ENCODE measurements at regions of chr7 and their contacts with region 1.

Region 1: GRCh38 chr7:27095897-27096767 is at the start of gene HOXA1:
- DNase-seq: peak; percentile 92 to 95
- ATAC-seq: peak; percentile 86
- H3K4me3 ChIP-seq: peak within 1 kb of the TSS; percentile 80 to 91
- H3K27ac ChIP-seq: peak within 1 kb of the TSS; percentile 18 to 90
- H3K4me1 ChIP-seq: no peaks in the 10 kb centered on the region
- H3K27me3 ChIP-seq: no peaks in the 10 kb centered on the region
- total RNA-seq, gene HOXA1: 1.3 to 1.6 TPM

Region 2: DNA sequence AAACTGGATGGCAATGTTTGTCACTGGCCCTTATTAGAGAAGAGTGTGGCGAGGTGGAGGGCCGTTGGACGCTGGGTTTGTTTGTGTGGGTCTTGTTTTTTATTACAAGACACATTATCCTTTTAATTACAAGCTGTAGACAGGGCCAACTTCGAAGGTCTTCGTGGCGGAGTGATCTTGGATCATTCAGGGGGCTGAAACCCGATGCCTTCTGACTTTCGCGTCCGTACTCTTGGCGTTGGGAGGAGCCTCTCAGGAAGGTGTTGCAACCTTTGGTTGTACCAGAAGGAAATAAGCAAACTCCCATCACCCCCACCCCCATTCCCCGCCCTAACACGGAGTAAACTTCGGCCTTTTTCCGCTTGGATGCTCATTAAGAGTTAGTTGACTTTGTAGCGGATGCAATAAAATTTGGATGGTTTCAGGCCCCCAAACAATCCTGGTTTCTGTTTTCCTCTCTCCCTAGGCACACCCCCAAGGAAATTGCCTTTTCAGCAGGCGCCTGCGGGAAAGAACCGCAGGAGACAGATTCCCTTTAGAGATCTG is 1238.7 kb before region 1 on chr7:
- intact Hi-C with region 1: loop called in 1 of 2 experiments (anchors 2 kb)
- DNase-seq: no peak
- ATAC-seq: no peak
- H3K4me3 ChIP-seq: peak overlapping the region in 1 of 2 donors; percentile 28
- H3K27ac ChIP-seq: no peak overlapping the region
- H3K4me1 ChIP-seq: no peaks in the 10 kb centered on the region
- H3K27me3 ChIP-seq: peaks cover 0 to 4% of the 10 kb centered on the region in 2 donors

Region 3: DNA sequence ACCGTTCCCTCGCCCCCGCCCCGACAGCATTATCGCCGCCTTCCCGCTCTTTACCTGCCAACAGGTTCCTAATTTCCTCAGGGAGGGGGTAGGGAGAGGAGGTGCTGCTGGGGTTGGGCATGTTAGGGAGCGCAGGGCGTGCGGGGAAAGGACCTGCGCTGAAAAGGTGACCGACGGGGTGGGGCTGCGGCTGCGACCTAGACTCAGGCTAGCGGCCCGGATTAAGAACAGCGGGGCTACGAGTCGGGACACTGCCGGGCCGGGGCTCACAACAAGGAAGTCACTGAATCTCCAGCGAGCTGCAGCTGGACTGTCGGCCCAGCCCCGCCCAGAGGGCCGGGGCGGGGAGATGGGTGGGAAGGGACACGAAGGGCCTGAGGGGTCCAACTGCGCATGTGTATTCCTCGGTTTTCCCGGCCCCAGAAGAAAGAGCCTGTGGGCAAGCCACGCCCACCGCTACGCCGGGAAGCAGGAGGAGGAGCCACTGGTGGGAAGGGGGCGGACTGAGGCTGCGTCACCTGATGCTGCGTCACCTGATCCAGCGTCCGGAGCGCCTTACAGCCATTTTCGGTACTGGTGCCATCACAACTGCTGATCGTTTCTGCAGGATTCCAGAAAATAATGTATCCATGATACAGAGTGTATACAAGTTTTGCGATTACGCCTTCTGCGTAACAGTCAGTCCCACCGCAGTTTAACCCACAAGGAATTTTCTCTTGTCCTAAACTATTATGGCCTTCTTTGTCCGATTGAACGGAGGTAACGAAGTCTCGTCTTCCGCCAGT is 231.6 kb before region 1 on chr7 and contains the start of gene SKAP2:
- intact Hi-C with region 1: loop called (anchors 1 to 5 kb)
- DNase-seq: peak; percentile 99
- ATAC-seq: peak; percentile 99
- H3K4me3 ChIP-seq: peak within 1 kb of the TSS; percentile 45 to 66
- H3K27ac ChIP-seq: peak within 1 kb of the TSS in 1 of 2 donors; percentile 19
- H3K4me1 ChIP-seq: no peaks in the 10 kb centered on the region
- H3K27me3 ChIP-seq: no peaks in the 10 kb centered on the region
- total RNA-seq, gene SKAP2: 43.4 to 48.5 TPM

Region 4: DNA sequence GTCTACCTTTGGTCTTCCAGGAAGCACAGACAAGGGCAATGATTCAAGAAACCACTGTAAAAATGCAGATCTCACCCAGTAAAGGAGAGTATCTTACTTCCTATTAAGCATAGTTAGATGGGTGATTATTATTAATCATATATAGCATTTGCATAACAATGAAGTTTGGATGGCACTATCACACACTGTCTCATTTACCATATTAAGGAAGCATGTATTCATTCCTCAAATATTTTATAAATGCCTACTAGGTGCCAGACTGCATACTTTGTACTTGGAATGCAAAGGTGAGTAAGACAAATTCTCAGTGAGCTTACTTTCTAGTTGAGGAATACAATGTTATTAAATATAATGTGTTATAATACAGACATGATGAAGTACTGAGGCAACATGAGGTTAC is 177.9 kb before region 1 on chr7:
- intact Hi-C with region 1: no loop called
- DNase-seq: no peak
- ATAC-seq: no peak
- H3K4me3 ChIP-seq: no peak overlapping the region
- H3K27ac ChIP-seq: no peak overlapping the region
- H3K4me1 ChIP-seq: no peaks in the 10 kb centered on the region
- H3K27me3 ChIP-seq: no peaks in the 10 kb centered on the region

Region 5: DNA sequence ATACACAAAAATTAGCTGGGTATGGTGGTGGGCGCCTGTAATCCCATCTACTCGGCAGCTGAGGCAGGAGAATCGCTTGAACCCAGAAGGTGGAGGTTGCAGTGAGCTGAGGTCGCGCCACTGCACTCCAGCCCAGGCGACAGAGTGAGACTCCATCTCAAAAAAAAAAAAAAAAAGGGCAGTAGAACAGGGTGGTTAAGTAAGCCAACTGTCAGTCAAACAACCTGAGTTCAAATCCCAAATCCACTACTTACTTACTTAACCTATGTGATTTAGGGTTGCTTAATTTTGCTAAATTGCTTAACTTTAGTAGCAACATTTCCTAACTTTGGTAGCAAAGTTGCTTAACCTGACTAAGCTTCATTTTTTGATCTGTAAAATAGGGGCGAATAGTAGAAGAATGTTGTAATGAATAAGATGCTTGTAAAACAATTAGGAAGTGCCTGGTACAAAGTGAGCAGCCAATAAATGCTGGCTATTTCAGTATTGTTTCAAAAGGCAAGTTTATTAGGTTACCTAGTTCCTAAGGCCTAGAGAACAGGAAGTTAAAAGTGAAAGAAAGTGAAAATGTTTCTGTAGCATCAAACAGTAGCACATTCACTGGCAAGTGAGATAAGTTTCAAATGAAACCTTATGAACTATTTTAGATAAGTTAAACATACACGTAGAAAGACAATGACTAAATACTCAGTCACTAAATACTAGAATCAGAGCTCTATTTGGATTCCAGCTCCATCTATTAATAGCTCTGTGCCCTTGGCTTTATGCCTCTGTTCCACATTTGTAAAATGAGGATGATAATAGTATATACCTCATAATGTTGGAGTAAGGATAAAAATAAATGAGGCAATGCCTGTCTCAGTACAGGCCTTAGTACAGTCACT is 64.6 kb before region 1 on chr7:
- intact Hi-C with region 1: loop called (anchors 5 kb)
- DNase-seq: no peak
- ATAC-seq: peak; percentile 26
- H3K4me3 ChIP-seq: no peak overlapping the region
- H3K27ac ChIP-seq: peak overlapping the region in 1 of 2 donors; percentile 92
- H3K4me1 ChIP-seq: no peaks in the 10 kb centered on the region
- H3K27me3 ChIP-seq: no peaks in the 10 kb centered on the region

Region 6: DNA sequence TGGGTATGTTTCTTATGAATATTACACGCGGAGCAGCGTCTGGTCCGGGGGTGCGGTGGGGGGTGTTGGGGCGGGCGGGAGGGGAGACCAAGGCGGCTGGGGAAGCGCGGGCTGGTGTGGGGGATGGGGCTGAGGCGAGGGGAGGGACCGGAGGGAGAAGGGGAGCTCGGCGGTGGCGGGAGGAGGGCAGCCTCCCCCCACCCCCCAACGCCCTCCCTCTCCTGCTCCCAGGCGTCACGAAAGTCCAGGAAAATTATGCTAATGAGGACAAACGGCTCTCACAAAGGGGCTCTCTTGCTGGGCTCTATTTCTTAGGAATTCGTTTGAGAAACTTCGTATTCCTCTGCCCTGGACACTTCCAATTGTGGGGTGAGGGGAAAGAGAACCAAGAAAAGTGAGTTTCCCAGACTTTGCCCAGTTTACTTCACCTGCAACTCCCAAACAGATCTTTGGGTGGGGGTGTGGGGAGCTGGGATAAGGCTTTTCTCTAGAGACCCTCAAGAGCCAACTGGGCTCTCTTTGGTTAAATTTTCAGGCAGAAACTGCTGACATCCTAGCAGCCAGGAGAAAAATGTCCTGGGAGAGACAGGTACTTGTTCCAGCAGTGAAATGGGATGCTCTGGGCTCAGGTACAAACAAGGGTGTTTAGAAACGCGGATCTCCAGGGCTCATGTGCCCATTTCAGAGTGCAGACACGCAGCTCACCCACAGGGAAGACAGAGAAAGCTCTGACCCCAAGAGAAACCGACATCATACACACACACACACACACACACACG is 18.0 kb after region 1 on chr7:
- intact Hi-C with region 1: loop called in 1 of 2 experiments (anchors 2 kb)
- DNase-seq: peak; percentile 81 to 88
- ATAC-seq: peak; percentile 12
- H3K4me3 ChIP-seq: peak overlapping the region; percentile 84 to 94
- H3K27ac ChIP-seq: peak overlapping the region; percentile 92 to 95
- H3K4me1 ChIP-seq: peaks cover 0 to 6% of the 10 kb centered on the region in 2 donors
- H3K27me3 ChIP-seq: no peaks in the 10 kb centered on the region

Region 7: GRCh38 chr7:27130540-27131389 is 34.6 kb after region 1 on chr7 and contains the start of gene HOXA4:
- intact Hi-C with region 1: loop called in 1 of 2 experiments (anchors 5 kb)
- DNase-seq: peak; percentile 96 to 98
- ATAC-seq: peak; percentile 97
- H3K4me3 ChIP-seq: peak within 1 kb of the TSS; percentile 89 to 90
- H3K27ac ChIP-seq: peak within 1 kb of the TSS; percentile 31 to 68
- H3K4me1 ChIP-seq: no peaks in the 10 kb centered on the region
- H3K27me3 ChIP-seq: no peaks in the 10 kb centered on the region
- total RNA-seq, gene HOXA4: 5.6 to 11.6 TPM

Region 8: DNA sequence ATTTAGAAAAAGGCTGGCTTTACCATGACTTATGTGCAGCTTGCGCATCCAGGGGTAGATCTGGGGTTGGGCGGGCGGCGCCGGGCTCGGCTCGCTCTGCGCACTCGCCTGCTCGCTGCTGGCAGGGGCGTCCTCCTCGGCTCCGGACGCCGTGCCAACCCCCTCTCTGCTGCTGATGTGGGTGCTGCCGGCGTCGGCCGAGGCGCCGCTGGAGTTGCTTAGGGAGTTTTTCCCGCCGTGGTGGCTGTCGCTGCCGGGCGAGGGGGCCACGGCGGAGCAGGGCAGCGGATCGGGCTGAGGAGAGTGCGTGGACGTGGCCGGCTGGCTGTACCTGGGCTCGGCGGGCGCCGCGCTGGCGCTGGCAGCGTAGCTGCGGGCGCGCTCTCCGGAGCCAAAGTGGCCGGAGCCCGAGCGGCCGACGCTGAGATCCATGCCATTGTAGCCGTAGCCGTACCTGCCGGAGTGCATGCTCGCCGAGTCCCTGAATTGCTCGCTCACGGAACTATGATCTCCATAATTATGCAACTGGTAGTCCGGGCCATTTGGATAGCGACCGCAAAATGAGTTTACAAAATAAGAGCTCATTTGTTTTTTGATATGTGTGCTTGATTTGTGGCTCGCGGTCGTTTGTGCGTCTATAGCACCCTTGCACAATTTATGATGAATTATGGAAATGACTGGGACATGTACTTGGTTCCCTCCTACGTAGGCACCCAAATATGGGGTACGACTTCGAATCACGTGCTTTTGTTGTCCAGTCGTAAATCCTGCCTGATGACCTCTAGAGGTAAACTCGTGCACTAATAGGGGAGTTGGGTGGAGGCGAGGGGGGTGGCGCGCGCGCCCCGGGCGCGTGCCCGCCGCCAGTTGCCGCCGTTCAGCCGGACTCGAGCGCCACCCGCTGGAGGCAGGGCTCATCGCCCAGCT is 47.2 kb after region 1 on chr7 and contains the start of gene HOXA5:
- intact Hi-C with region 1: loop called in 1 of 2 experiments (anchors 5 kb)
- DNase-seq: peak; percentile 80 to 92
- ATAC-seq: peak; percentile 81
- H3K4me3 ChIP-seq: peak within 1 kb of the TSS; percentile 37 to 67
- H3K27ac ChIP-seq: peak within 1 kb of the TSS; percentile 20 to 58
- H3K4me1 ChIP-seq: no peaks in the 10 kb centered on the region
- H3K27me3 ChIP-seq: no peaks in the 10 kb centered on the region
- total RNA-seq, gene HOXA5: 8.0 to 11.8 TPM

Measured in aorta (tissue), 5 donors.